Psoas muscle (tissue), 8 donors: ENCODE measurements at regions of chr3 and their contacts with region 1.

Region 1: GRCh38 chr3:46378426-46378942 is 7.7 kb downstream of the CCR5 start:
- DNase-seq: peak; percentile 69 to 78
- ATAC-seq: peak; percentile 59 to 76 (median 66)
- H3K4me3 ChIP-seq: peak overlapping the region; percentile 17
- H3K27ac ChIP-seq: no peak overlapping the region
- H3K4me1 ChIP-seq: peaks cover 20% of the 10 kb centered on the region
- H3K27me3 ChIP-seq: no peaks in the 10 kb centered on the region
- CTCF ChIP-seq: peak; percentile 65

Region 2: DNA sequence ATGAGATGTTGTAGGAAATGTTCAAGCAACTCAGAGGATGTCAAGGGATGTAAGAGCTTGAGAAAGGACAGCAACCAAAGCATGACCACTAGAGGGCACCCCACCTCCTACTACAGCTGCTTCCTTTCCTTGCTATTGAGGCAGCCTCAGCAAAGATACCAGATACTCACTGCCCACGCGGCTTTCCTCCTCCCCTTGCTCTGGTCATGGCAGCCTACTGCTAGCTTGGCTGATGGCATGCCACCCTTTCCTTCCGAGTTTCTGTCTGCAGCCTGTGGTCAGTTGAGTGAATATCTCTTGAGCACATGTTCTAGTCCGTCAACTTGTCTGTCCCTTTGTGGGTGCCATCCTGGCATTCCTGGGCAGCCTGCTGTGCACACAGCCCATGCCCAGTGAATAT is 439.6 kb before region 1 on chr3:
- intact Hi-C with region 1: loop called in 1 of 2 experiments (anchors 5 kb)
- DNase-seq: peak; percentile 76 to 88
- ATAC-seq: peak; percentile 92 to 96 (median 95)
- H3K4me3 ChIP-seq: no peak overlapping the region
- H3K27ac ChIP-seq: peak overlapping the region; percentile 78
- H3K4me1 ChIP-seq: peaks cover 28% of the 10 kb centered on the region
- H3K27me3 ChIP-seq: no peaks in the 10 kb centered on the region
- CTCF ChIP-seq: peak; percentile 90

Region 3: DNA sequence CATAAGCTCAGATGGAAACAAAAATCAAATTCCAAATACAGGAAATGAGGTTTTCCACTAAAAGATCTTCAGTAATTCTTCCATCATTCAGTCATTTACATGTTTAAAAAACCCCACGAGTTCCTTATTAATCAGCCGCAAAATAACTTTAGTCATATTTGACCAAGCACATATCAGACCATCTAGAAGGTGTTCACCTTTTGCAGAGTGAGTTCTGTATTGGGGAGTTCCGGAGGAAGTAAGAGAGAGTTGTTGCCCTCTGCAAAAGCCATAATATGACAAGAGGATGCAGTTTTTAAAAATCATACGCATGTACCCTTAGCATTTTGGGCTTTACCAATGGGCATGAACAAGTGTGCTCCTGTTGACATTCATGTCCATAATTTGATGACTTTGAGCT is 231.9 kb before region 1 on chr3:
- intact Hi-C with region 1: loop called in 1 of 2 experiments (anchors 5 kb)
- DNase-seq: no peak
- ATAC-seq: no peak
- H3K4me3 ChIP-seq: no peak overlapping the region
- H3K27ac ChIP-seq: no peak overlapping the region
- H3K4me1 ChIP-seq: no peaks in the 10 kb centered on the region
- H3K27me3 ChIP-seq: no peaks in the 10 kb centered on the region
- CTCF ChIP-seq: no peak

Region 4: GRCh38 chr3:46427916-46428833 is 49.7 kb after region 1 on chr3:
- intact Hi-C with region 1: no loop called
- DNase-seq: no peak
- ATAC-seq: peak in 2 of 4 donors; percentile 54 to 61
- H3K4me3 ChIP-seq: no peak overlapping the region
- H3K27ac ChIP-seq: no peak overlapping the region
- H3K4me1 ChIP-seq: no peaks in the 10 kb centered on the region
- H3K27me3 ChIP-seq: no peaks in the 10 kb centered on the region
- CTCF ChIP-seq: no peak